HCT116 (cell line): ENCODE measurements at regions of chr22 and their contacts with region 1.

Region 1: GRCh38 chr22:42090596-42091454 is at the start of gene NDUFA6:
- DNase-seq: peak; percentile 98
- ATAC-seq: peak; percentile 92
- H3K4me3 ChIP-seq: peak within 1 kb of the TSS; percentile 79 to 89
- H3K27ac ChIP-seq: peak within 1 kb of the TSS; percentile 90
- H3K4me1 ChIP-seq: peaks cover 5 to 19% of the 10 kb centered on the region in 2 experiments; a peak in 3 of 4 replicates
- H3K27me3 ChIP-seq: no peaks in the 10 kb centered on the region
- CTCF ChIP-seq: peak; percentile 78 to 97 (median 85)
- POLR2A ChIP-seq: peak; percentile 74
- RAD21 ChIP-seq: peak; percentile 89
- total RNA-seq, gene NDUFA6: 80.5 TPM

Region 2: DNA sequence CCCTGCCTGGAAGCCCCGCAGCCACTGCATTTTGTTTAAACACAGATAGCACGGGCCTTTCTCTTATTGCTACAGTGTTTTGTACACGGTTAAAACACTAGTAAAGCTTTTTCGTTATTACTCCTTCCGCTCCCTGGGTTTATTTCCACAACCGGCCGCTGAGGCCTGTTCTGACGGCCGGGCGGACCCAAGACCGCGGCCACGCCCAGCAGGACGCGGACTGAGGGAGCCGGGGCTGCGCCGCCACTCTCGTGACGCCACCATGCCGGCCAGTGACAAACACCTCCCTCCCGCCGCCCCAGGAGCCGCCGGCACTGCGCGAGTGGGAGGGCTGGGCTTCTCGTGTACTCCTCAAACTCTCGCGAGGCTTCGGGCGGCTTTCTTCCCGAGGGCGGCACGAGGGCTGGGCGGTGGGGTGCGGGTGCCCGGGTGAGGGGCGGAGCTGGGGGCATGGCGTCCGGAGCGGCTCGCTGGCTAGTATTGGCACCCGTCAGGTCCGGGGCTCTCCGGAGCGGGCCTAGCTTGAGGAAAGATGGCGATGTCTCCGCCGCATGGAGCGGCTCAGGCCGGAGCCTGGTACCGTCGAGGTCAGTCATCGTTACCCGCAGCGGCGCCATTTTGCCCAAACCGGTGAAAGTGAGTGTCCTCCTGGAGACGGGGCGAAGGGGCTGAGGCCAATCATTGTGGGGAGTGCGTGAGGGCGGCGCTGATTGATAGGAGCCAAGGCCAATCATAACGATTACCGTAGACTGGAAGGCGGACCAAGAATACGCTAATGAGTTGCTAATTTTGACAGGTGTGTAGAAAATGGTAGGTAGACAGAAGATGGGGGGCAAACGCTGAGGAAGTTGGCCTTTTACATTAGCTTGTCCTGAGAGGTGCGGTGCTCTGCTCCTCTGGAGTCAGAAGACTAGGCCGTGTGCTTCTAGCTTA is 11.2 kb before region 1 on chr22 and contains the start of gene SMDT1:
- CTCF ChIA-PET with region 1: interaction called, 7 read pairs
- POLR2A ChIA-PET with region 1: interaction called, 27 read pairs
- RAD21 ChIA-PET with region 1: no interaction called
- intact Hi-C with region 1: no loop called
- DNase-seq: peak; percentile 97
- ATAC-seq: peak; percentile 93
- H3K4me3 ChIP-seq: peak within 1 kb of the TSS; percentile 68 to 69
- H3K27ac ChIP-seq: peak within 1 kb of the TSS; percentile 73
- H3K4me1 ChIP-seq: peaks cover 12 to 19% of the 10 kb centered on the region in 2 experiments
- H3K27me3 ChIP-seq: no peaks in the 10 kb centered on the region
- CTCF ChIP-seq: no peak
- POLR2A ChIP-seq: peak; percentile 67
- RAD21 ChIP-seq: no peak
- total RNA-seq, gene SMDT1: 51.9 TPM

Region 3: DNA sequence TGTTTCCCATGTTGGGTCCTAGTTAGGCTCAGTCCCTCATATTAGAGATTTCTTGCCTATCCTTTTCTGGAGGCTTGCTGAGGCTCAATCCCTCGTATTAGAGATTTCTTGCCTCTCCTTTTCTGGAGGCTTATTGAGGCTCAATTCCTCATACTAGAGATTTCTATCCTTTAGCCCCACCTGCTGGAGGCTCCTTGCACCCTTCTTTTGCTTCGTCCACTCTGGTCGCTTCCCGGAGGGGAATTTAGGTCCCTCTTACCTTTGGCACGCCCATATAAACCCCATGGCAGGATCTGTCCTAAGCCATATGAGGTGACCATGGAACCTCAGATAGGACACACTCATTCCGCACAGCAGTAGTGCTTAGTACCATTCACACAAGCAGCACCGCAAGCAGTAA is 23.9 kb after region 1 on chr22:
- CTCF ChIA-PET with region 1: interaction called, 10 read pairs
- POLR2A ChIA-PET with region 1: interaction called, 7 read pairs
- RAD21 ChIA-PET with region 1: no interaction called
- intact Hi-C with region 1: no loop called
- DNase-seq: peak; percentile 26
- ATAC-seq: peak; percentile 68
- H3K4me3 ChIP-seq: no peak overlapping the region
- H3K27ac ChIP-seq: no peak overlapping the region
- H3K4me1 ChIP-seq: no peaks in the 10 kb centered on the region
- H3K27me3 ChIP-seq: no peaks in the 10 kb centered on the region
- CTCF ChIP-seq: peak; percentile 45 to 57 (median 50); a peak in 5 of 6 replicates
- POLR2A ChIP-seq: no peak
- RAD21 ChIP-seq: peak; percentile 63

Region 4: DNA sequence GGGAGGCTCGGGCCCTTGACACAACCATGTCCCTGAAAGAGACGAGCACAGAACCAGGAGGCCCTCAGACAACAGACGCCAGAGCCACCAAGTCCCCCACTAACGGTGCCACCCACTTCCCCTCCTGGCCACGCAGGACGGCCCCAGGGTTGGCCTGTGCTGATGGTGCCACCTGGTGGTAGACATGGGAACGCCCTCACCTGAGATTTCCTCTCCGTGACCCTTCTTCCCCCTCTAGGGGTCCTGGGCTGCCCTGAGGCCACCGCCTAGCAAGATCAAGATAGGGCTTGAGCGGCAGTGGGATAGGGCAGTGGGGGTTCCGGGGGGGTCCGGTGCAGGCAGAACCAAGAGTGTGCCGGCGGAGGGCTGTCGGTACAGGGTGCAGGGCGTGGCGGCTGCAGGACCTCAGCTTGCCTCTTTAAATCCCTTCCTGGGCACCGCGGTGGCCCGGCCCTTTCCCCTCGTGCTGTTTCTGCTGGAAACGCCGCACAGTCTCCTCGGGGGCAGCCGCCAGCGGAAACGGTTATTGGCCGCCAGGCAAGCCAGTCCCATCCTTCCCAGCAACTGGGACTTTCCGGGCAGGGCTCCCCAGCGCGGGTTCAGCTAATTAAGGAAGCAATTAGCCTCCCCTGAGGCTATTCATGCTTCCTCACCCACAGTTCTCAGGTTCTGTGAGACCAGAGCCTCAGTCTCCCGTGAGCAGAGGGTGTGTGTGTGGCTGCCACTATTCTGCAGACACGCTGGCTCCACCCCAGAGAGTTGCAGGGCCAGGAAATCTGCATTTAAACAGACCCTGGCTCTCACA is 346.9 kb after region 1 on chr22:
- CTCF ChIA-PET with region 1: interaction called, 32 read pairs
- POLR2A ChIA-PET with region 1: no interaction called
- RAD21 ChIA-PET with region 1: no interaction called
- intact Hi-C with region 1: loop called (anchors 1 kb)
- DNase-seq: peak; percentile 51
- ATAC-seq: peak; percentile 91
- H3K4me3 ChIP-seq: peak overlapping the region; percentile 49 to 64
- H3K27ac ChIP-seq: no peak overlapping the region; the same call in 1 of the 2 replicates
- H3K4me1 ChIP-seq: peaks cover 0 to 18% of the 10 kb centered on the region in 2 experiments; a peak in 3 of 4 replicates
- H3K27me3 ChIP-seq: no peaks in the 10 kb centered on the region
- CTCF ChIP-seq: peak; percentile 96 to 99 (median 98)
- POLR2A ChIP-seq: no peak
- RAD21 ChIP-seq: peak; percentile 99

Region 5: DNA sequence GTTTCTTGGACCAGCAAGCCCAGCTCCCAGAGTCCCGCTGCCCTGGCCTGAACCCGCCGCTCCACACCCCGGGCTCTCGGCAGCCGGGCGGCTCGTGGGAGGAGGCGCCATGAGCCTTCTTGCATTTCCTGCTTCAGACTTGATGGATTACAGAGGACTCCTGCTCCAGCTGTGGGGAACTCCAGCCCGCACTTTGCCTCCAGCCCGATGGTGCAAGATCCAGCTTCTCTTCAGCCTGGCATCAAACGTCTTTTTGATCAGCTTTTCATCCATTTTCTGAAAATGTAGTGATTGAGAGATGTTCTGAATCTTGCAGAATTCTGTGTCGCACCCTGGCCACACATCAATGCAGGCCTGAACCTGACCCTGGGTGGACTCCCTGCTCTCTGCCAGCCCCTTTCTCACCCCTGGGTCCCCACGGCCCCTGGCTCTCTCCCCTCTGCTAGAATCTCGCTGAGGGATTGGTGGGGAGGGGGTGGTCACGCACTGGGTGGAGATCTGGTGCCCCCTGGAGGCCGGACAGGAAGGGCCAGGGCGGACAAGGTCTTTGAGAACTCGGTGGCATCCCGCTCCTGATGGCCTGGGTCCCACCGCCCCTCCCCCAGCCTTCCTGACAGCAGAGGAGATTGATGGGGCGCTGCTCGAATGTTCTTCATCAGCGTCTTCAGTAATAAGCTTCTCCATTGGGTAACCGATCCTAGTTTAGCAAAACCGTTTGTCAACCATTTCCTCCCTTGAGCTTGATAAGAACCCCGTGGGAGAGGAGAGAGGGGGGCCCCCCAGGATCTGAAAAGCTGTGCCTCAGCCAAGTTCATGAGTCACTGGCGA is 353.5 kb after region 1 on chr22:
- CTCF ChIA-PET with region 1: interaction called, 32 read pairs
- POLR2A ChIA-PET with region 1: interaction called, 4 read pairs
- RAD21 ChIA-PET with region 1: interaction called in 1 of 2 experiments, 4 read pairs
- intact Hi-C with region 1: no loop called
- DNase-seq: peak; percentile 67
- ATAC-seq: peak; percentile 89
- H3K4me3 ChIP-seq: peak overlapping the region; percentile 40 to 49
- H3K27ac ChIP-seq: peak overlapping the region; percentile 29; the same call in 1 of the 2 replicates
- H3K4me1 ChIP-seq: peaks cover 11 to 21% of the 10 kb centered on the region in 2 experiments
- H3K27me3 ChIP-seq: no peaks in the 10 kb centered on the region
- CTCF ChIP-seq: peak; percentile 75 to 92 (median 90)
- POLR2A ChIP-seq: peak; percentile 44
- RAD21 ChIP-seq: peak; percentile 86

Region 6: DNA sequence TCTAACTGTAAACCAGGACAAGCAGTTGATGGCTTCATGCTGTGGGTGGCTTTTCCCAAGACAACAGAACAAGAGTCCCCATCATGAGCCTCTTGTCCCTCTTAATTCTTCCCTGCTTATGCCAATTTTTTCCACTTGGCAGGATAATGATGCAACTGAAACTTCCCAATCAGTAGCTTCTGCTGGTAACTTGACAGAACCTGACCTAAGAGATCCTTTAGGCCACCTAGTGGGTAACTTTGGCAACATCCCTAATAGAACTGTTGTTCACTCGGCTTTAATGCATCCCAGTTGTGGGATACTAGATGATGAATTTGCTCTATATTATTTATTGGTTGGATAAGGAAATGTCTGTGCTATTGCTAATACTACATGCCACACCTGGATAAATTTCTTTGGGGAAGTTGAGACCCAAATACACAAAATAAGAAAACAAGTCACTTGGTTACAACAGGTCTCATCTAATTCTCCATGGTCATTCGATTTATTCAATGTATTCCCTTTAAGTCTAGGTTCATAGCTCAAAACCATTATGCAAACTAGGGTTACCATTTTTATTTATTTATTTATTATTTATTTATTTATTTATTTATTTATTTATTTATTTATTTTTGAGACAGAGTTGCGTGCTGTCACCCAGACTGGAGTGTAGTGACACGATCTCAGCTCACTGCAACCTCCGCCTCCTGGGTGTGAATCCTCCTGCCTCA is 382.8 kb after region 1 on chr22:
- CTCF ChIA-PET with region 1: interaction called, 9 read pairs
- POLR2A ChIA-PET with region 1: no interaction called
- RAD21 ChIA-PET with region 1: no interaction called
- intact Hi-C with region 1: loop called (anchors 1 kb)
- DNase-seq: peak; percentile 73
- ATAC-seq: peak; percentile 97
- H3K4me3 ChIP-seq: no peak overlapping the region
- H3K27ac ChIP-seq: no peak overlapping the region
- H3K4me1 ChIP-seq: no peaks in the 10 kb centered on the region
- H3K27me3 ChIP-seq: peaks cover 5% of the 10 kb centered on the region; the same call in 1 of the 2 replicates
- CTCF ChIP-seq: peak; percentile 55 to 80 (median 78); a peak in 5 of 6 replicates
- POLR2A ChIP-seq: no peak
- RAD21 ChIP-seq: peak; percentile 67